ENCODE measurements at regions of chr3 and their contacts with region 1.

Region 1: DNA sequence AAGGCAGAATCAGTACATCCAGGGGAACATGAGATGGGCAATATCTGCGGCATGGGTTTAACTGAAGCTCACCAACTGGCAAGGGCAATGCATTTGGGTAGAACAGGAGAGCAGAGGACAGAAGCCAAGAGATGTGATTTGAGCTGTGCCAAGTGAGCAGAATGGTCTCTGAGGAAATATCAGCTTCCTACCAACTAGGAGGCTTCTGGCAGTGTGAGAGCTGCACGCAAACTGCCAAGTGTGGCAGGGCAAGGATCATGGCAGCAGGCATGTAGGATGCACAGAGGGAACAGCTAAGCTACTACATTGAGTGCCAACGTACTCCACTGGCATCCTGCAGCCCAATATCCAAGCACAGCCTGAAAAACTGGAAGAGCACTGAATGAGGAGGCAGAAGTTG is 1036.5 kb downstream of the TUSC7 start:
- DNase-seq: no peak

Region 2: GRCh38 chr3:117788061-117788460 is 42.0 kb after region 1 on chr3:
- intact Hi-C with region 1: no loop called
- DNase-seq: peak in 1 of 42 donors; percentile 48

Region 3: GRCh38 chr3:117997201-117998049 is 251.4 kb after region 1 on chr3:
- intact Hi-C with region 1: loop called (anchors 10 kb)
- DNase-seq: peak; percentile 81 to 96 (median 89)

Measured in head of caudate nucleus (tissue), 42 donors.